ENCODE measurements at regions of chr16 and their contacts with region 1.

Region 1: GRCh38 chr16:84714028-84714427 is 14.2 kb downstream of the USP10 start:
- DNase-seq: no peak
- H3K4me3 ChIP-seq: no peak overlapping the region
- H3K27ac ChIP-seq: no peak overlapping the region
- H3K4me1 ChIP-seq: peaks cover 23 to 78% (median 51%) of the 10 kb centered on the region in 4 donors
- H3K27me3 ChIP-seq: no peaks in the 10 kb centered on the region
- CTCF ChIP-seq: no peak
- EP300 ChIP-seq: no peak
- POLR2A ChIP-seq: no peak

Region 2: GRCh38 chr16:84629580-84629979 is 84.4 kb before region 1 on chr16:
- intact Hi-C with region 1: loop called (anchors 10 kb)
- DNase-seq: no peak
- H3K4me3 ChIP-seq: no peak overlapping the region
- H3K27ac ChIP-seq: no peak overlapping the region
- H3K4me1 ChIP-seq: peaks cover 0 to 13% (median 2%) of the 10 kb centered on the region in 4 donors
- H3K27me3 ChIP-seq: no peaks in the 10 kb centered on the region
- CTCF ChIP-seq: no peak
- EP300 ChIP-seq: no peak
- POLR2A ChIP-seq: no peak

Measured in stomach (tissue), 19 donors.